Tibial artery (tissue), 4 donors: ENCODE measurements at regions of chr3 and their contacts with region 1.

Region 1: DNA sequence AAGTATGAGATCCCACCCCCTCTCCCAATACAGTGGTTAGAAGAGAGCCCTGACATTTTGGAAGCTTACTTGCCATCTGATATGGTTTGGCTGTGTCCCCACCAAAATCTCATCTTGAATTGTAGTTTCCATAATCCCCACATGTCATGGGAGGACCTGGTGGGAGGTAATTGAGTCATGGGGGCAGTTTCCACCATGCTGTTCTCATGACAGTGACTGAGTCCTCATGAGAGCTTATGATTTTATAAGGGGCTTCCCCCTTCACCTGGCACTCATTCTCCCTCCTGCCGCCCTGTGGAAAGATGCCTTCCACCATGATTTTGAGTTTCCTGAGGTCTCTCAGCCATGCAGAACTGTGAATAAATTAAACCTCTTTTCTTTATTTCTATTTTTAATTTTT is 28.8 kb upstream of the HES1 start:
- DNase-seq: no peak
- H3K4me3 ChIP-seq: no peak overlapping the region
- H3K27ac ChIP-seq: no peak overlapping the region
- H3K4me1 ChIP-seq: no peaks in the 10 kb centered on the region
- H3K27me3 ChIP-seq: peaks cover 0 to 34% of the 10 kb centered on the region in 2 donors
- CTCF ChIP-seq: no peak

Region 2: GRCh38 chr3:194046995-194047645 is 60.0 kb before region 1 on chr3:
- intact Hi-C with region 1: loop called (anchors 5 kb)
- DNase-seq: peak in 1 of 2 donors; percentile 41
- H3K4me3 ChIP-seq: no peak overlapping the region
- H3K27ac ChIP-seq: no peak overlapping the region
- H3K4me1 ChIP-seq: no peaks in the 10 kb centered on the region
- H3K27me3 ChIP-seq: no peaks in the 10 kb centered on the region
- CTCF ChIP-seq: no peak